Dorsolateral prefrontal cortex (tissue), 120 donors: ENCODE measurements at regions of chr9 and their contacts with region 1.

Region 1: GRCh38 chr9:123863164-123863855 is 66.6 kb downstream of the DENND1A start:
- DNase-seq: no peak
- H3K4me3 ChIP-seq: no peak overlapping the region
- H3K27ac ChIP-seq: peak overlapping the region in 34 of 59 donors; percentile 1 to 87 (median 53)
- H3K27me3 ChIP-seq: no peaks in the 10 kb centered on the region
- CTCF ChIP-seq: no peak

Region 2: GRCh38 chr9:123749580-123750202 is 113.6 kb before region 1 on chr9:
- intact Hi-C with region 1: loop called in 1 of 2 experiments (anchors 10 kb)
- DNase-seq: no peak
- H3K4me3 ChIP-seq: no peak overlapping the region
- H3K27ac ChIP-seq: peak overlapping the region in 10 of 59 donors; percentile 6 to 62 (median 24)
- H3K27me3 ChIP-seq: no peaks in the 10 kb centered on the region
- CTCF ChIP-seq: no peak

Region 3: GRCh38 chr9:123796618-123797484 is 66.5 kb before region 1 on chr9:
- intact Hi-C with region 1: no loop called
- DNase-seq: no peak
- H3K4me3 ChIP-seq: peak overlapping the region in 5 of 59 donors; percentile 8 to 25 (median 18)
- H3K27ac ChIP-seq: no peak overlapping the region
- H3K27me3 ChIP-seq: no peaks in the 10 kb centered on the region
- CTCF ChIP-seq: no peak

Region 4: DNA sequence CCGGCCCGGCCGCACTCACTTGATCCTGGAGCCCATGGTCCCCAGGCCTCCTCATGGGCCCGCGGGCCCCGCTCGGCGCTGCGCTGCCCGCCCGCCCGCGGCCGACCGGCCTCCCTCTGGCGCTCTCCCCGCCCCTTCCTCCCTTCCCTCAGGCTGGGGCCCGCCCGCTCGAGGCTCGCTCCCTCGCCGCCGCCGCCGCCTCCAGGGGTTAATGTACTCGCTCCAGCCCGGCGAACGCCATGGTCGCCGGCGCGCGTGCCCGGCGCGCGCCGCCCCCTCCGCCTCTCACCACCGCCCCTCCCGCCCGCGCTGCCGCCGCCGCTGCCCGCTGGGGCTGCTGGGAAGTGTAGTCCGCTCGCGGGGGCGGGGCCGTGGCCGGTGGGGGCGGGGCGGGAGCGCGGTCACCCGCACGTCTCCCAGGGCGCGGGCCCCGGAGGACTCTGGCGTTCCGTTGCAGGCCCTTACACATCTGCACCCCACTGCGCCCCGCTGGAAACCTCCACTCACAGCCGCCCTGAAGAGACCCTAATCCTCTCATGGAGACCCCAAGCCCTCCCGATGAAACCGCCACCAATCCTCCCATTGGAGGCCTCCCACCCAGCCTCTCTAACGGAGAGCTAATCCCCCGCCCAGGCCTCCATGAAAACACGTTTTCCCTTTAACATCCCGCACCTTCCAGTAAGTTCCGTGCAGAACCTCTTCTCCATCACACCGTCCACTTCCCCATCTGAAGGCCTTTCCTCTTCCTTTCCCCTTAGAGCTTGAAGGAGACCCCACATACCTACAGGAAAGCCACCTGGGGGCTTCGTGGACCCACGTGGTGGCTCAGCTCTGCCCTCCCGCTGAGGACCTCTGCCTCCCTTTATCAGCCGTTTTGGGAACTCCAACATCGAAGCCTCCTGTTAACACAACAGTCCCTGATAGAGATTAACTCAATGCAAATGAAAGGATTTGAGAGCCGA is 66.8 kb after region 1 on chr9 and contains the start of gene DENND1A:
- intact Hi-C with region 1: loop called in 1 of 2 experiments (anchors 5 kb)
- DNase-seq: peak; percentile 69 to 90 (median 84)
- H3K4me3 ChIP-seq: peak within 1 kb of the TSS; percentile 54 to 87 (median 76)
- H3K27ac ChIP-seq: peak within 1 kb of the TSS in 55 of 59 donors; percentile 6 to 86 (median 70)
- H3K27me3 ChIP-seq: no peaks in the 10 kb centered on the region
- CTCF ChIP-seq: peak in 13 of 56 donors; percentile 5 to 38 (median 13)
- total RNA-seq, gene DENND1A: 39.1 to 88.3 (median 52.8) TPM